Sigmoid colon (tissue), 7 donors: ENCODE measurements at regions of chr11 and their contacts with region 1.

Region 1: GRCh38 chr11:34051349-34052035 is at the start of gene CAPRIN1:
- DNase-seq: peak; percentile 92
- H3K4me3 ChIP-seq: peak within 1 kb of the TSS; percentile 84 to 98 (median 93)
- H3K27ac ChIP-seq: peak within 1 kb of the TSS; percentile 98 to 99 (median 98)
- H3K4me1 ChIP-seq: peaks cover 0 to 38% (median 30%) of the 10 kb centered on the region in 4 donors
- H3K27me3 ChIP-seq: no peaks in the 10 kb centered on the region
- CTCF ChIP-seq: no peak
- EP300 ChIP-seq: no peak
- POLR2A ChIP-seq: peak; percentile 54 to 72
- total RNA-seq, gene CAPRIN1: 107 to 118 (median 113) TPM

Region 2: DNA sequence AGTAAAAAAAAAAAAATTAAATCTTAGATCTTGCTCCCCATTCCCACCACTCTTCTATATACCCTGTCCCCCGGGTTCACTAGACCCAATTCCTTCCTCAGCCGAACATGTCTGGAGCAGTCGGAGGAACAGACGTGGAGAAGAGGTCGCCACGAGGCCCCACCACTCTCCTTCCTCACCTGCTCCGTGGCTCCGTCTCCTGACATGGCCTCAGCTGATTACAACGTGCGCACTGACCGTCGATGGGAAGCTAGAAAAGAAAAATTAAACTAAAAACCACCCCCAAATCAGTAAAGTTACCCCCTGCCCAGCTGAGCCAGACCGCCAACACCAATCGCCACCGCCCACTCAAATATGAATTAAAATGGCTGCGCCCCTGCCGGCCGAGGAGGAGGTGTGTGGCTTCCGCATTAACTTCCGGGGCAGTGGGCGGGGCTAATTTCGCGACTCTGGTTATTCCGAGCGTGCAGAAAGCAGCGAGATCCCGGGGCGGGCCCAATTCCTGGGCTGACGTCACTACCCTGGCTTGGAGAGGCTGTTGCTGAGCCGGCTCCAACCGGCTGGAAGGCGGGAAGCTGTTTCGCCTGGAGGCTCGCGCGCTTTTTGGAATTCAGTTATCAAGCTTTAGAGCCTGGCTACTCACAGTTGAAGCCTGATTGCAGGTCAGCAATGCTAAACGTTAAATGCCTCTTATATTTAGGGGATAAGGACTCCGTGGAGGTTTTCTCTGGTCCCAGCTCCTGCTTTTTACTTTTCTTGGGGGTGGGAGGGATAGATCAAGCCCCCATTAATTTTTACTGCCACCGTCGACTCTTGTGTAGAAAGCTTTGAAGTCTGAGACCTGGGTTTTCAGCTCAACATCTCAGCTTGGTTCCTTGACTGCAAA is 890.1 kb before region 1 on chr11 and contains the start of gene CSTF3:
- intact Hi-C with region 1: loop called (anchors 10 kb)
- DNase-seq: peak; percentile 100
- H3K4me3 ChIP-seq: peak within 1 kb of the TSS; percentile 66 to 81 (median 78)
- H3K27ac ChIP-seq: peak within 1 kb of the TSS; percentile 80 to 84 (median 83)
- H3K4me1 ChIP-seq: peaks cover 0 to 35% (median 24%) of the 10 kb centered on the region in 4 donors
- H3K27me3 ChIP-seq: no peaks in the 10 kb centered on the region
- CTCF ChIP-seq: peak; percentile 12 to 87 (median 77)
- EP300 ChIP-seq: peak in 1 of 4 donors; percentile 37
- POLR2A ChIP-seq: peak; percentile 19 to 57
- total RNA-seq, gene CSTF3: 9.9 to 14.6 (median 11.6) TPM

Region 3: DNA sequence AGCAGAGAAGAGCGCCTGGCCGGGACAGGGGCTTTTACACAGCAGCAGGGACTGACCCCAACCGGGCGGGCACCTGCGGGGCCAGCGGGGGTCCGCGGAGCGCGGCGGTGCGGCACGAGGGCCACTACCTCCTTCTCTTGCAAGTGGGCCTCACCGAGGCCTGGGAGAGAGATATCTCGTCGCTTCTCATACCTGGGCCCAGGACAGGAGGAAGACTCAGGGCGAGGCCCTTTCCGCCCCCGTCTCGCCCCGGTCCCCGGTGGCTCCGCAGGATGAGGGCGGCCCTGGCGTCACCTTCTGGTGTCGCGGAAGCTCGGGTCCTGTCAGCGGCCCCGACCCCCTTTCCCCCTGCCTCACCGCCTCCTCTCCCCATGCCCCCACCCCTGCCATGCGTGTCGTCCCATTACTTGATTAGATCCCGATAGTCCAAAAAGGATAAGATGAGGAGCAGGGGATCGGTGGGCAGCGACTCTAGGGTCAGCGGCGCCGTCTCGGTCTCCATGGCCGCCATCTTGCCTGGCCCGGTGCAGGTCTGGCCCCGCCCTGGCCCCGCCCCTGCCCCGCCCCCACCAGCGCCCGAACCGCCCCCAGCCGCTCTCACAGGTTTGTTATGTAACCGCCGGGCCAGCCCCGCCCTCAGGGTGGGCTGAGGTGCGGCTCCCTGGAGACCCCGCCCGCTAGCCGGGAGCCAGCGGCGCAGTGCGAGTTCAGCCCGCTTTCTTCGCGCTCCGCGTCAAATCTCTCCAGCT is 277.3 kb before region 1 on chr11 and contains the start of gene FBXO3:
- intact Hi-C with region 1: loop called (anchors 10 kb)
- DNase-seq: peak; percentile 95
- H3K4me3 ChIP-seq: peak within 1 kb of the TSS; percentile 83 to 97 (median 94)
- H3K27ac ChIP-seq: peak within 1 kb of the TSS; percentile 89 to 94 (median 90)
- H3K4me1 ChIP-seq: peaks cover 0 to 43% (median 39%) of the 10 kb centered on the region in 4 donors
- H3K27me3 ChIP-seq: no peaks in the 10 kb centered on the region
- CTCF ChIP-seq: no peak
- EP300 ChIP-seq: no peak
- POLR2A ChIP-seq: no peak
- total RNA-seq, gene FBXO3: 36.8 to 53.5 (median 50.4) TPM

Region 4: GRCh38 chr11:33891714-33892327 is 159.7 kb before region 1 on chr11 and contains the start of gene LMO2:
- intact Hi-C with region 1: no loop called
- DNase-seq: no peak
- H3K4me3 ChIP-seq: no peak within 1 kb of the TSS
- H3K27ac ChIP-seq: no peak within 1 kb of the TSS
- H3K4me1 ChIP-seq: no peaks in the 10 kb centered on the region
- H3K27me3 ChIP-seq: no peaks in the 10 kb centered on the region
- CTCF ChIP-seq: no peak
- EP300 ChIP-seq: no peak
- POLR2A ChIP-seq: no peak
- total RNA-seq, gene LMO2: 8.6 to 13.6 (median 12.0) TPM

Region 5: GRCh38 chr11:34105079-34105956 is 53.8 kb after region 1 on chr11 and contains the start of gene NAT10:
- intact Hi-C with region 1: loop called (anchors 1 kb)
- DNase-seq: peak; percentile 99
- H3K4me3 ChIP-seq: peak within 1 kb of the TSS; percentile 82 to 89 (median 84)
- H3K27ac ChIP-seq: peak within 1 kb of the TSS; percentile 87 to 95 (median 92)
- H3K4me1 ChIP-seq: peaks cover 0 to 29% (median 21%) of the 10 kb centered on the region in 4 donors
- H3K27me3 ChIP-seq: no peaks in the 10 kb centered on the region
- CTCF ChIP-seq: peak in 1 of 4 experiments; percentile 6
- EP300 ChIP-seq: no peak
- POLR2A ChIP-seq: peak; percentile 69 to 70
- total RNA-seq, gene NAT10: 13.2 to 28.0 (median 19.4) TPM

Region 6: DNA sequence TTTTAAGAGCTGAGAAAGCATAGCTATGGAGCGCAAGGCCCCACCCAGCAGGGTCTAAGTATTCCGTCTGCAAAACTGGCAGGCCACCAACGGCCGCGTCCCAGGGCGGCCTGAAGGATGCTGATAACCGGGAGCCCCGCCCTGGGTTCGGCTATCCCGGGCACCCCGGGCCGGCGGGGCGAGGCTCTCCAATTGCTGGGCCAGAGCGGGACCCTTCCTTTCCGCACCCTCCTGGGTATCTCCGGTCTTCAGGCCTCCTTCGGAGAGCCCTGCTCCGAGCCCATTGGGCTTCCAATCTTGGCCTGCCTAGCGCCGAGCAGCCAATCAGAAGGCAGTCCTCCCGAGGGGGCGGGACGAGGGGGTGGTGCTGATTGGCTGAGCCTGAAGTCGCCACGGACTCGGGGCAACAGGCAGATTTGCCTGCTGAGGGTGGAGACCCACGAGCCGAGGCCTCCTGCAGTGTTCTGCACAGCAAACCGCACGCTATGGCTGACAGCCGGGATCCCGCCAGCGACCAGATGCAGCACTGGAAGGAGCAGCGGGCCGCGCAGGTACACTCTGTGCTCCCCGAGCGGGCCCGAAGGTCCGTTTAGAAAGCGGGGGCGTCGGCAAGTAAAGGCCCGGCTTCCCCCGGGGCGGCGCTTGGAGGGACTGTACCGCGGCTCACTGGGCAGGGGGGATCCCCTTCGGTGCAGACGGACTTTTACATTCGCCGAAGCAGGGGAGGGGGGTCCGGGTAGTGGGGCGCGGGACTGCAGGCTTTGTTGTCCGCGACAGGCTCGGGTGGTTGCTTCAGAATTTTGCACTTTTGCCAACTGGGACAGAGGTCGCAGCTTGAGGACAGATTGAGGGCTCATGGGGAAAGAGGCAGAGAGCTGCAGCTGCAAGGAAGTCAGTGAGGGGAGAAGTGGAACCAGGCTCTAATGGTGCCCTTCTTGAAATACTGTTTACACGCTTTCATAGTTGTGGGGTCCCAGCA is 387.3 kb after region 1 on chr11 and contains the start of gene CAT:
- intact Hi-C with region 1: loop called (anchors 2 kb)
- DNase-seq: peak; percentile 99
- H3K4me3 ChIP-seq: peak within 1 kb of the TSS; percentile 67 to 90 (median 88)
- H3K27ac ChIP-seq: peak within 1 kb of the TSS; percentile 90 to 97 (median 92)
- H3K4me1 ChIP-seq: peaks cover 0 to 27% (median 19%) of the 10 kb centered on the region in 4 donors
- H3K27me3 ChIP-seq: no peaks in the 10 kb centered on the region
- CTCF ChIP-seq: no peak
- EP300 ChIP-seq: peak in 1 of 4 donors; percentile 19
- POLR2A ChIP-seq: peak in 1 of 2 donors; percentile 45
- total RNA-seq, gene CAT: 77.4 to 164 (median 103) TPM